Colonic mucosa (tissue), 4 donors: ENCODE measurements at regions of chr20 and their contacts with region 1.

Region 1: GRCh38 chr20:55415567-55416142 is 589.7 kb downstream of the CBLN4 start:
- DNase-seq: no peak
- H3K4me3 ChIP-seq: no peak overlapping the region
- H3K27ac ChIP-seq: no peak overlapping the region
- H3K4me1 ChIP-seq: no peaks in the 10 kb centered on the region
- H3K27me3 ChIP-seq: no peaks in the 10 kb centered on the region
- CTCF ChIP-seq: no peak

Region 2: GRCh38 chr20:56171087-56172012 is 755.7 kb after region 1 on chr20:
- intact Hi-C with region 1: loop called (anchors 10 kb)
- DNase-seq: no peak
- H3K4me3 ChIP-seq: no peak overlapping the region
- H3K27ac ChIP-seq: no peak overlapping the region
- H3K4me1 ChIP-seq: no peaks in the 10 kb centered on the region
- H3K27me3 ChIP-seq: no peaks in the 10 kb centered on the region
- CTCF ChIP-seq: no peak